T-cell (primary cell): ENCODE measurements at regions of chr19 and their contacts with region 1.

Region 1: GRCh38 chr19:11806354-11807098 is 7.5 kb upstream of the ZNF440 start:
- DNase-seq: no peak
- ATAC-seq: no peak
- H3K4me3 ChIP-seq: no peak overlapping the region
- H3K4me3 Mint-ChIP-seq: no peak overlapping the region
- H3K27ac ChIP-seq: no peak overlapping the region
- H3K27ac Mint-ChIP-seq: no peak overlapping the region
- H3K4me1 ChIP-seq: no peaks in the 10 kb centered on the region
- H3K4me1 Mint-ChIP-seq: no peaks in the 10 kb centered on the region
- H3K27me3 ChIP-seq: no peaks in the 10 kb centered on the region
- H3K27me3 Mint-ChIP-seq: no peaks in the 10 kb centered on the region

Region 2: GRCh38 chr19:11766597-11767591 is 39.6 kb before region 1 on chr19 and contains the start of gene ZNF441:
- CTCF ChIA-PET with region 1: interaction called in 1 of 2 experiments, 13 read pairs
- POLR2A ChIA-PET with region 1: no interaction called
- DNase-seq: peak; percentile 70 to 94 (median 83)
- ATAC-seq: peak; percentile 94 to 97 (median 95)
- H3K4me3 ChIP-seq: peak within 1 kb of the TSS; percentile 71 to 87
- H3K4me3 Mint-ChIP-seq: peak within 1 kb of the TSS; percentile 97 to 99 (median 98)
- H3K27ac ChIP-seq: peak within 1 kb of the TSS; percentile 78
- H3K27ac Mint-ChIP-seq: peak within 1 kb of the TSS; percentile 95
- H3K4me1 ChIP-seq: peaks cover 4 to 19% of the 10 kb centered on the region in 2 experiments
- H3K4me1 Mint-ChIP-seq: peaks cover 21 to 25% (median 23%) of the 10 kb centered on the region in 3 donors
- H3K27me3 ChIP-seq: no peaks in the 10 kb centered on the region
- H3K27me3 Mint-ChIP-seq: peaks cover 4 to 9% of the 10 kb centered on the region in 2 donors
- total RNA-seq, gene ZNF441: 4.8 to 18.4 (median 16.0) TPM

Region 3: DNA sequence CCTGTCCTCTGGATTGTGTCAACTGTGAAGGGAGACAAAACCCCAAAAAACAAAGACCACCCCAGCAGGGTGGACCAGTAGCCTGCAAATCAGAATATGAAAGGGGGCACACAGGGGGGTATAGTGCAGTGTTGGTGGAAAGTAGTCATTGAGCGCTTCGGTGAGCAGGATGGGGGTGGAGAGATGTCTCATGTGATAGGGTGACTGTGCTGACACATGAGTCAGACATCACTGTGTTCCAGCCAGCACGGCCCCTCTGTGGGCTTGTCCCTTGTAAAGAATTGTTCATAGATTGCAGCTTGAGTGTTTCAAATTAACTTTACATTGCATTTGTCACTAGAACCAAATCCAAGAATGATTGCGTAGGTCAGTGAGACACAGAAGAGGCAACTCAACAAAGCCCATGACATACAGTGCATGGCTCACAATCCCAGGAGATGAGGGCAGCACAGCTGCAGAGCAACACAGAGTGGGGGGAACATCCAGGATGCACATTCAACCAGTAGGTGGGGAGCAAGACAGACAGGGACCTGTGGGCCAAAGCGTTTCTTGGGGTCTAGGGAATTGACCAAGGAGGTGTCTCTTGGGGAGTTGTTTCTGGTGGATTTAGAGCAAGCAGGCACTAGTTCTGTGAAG is 15.1 kb after region 1 on chr19:
- CTCF ChIA-PET with region 1: no interaction called
- POLR2A ChIA-PET with region 1: no interaction called
- DNase-seq: no peak
- ATAC-seq: no peak
- H3K4me3 ChIP-seq: no peak overlapping the region
- H3K4me3 Mint-ChIP-seq: no peak overlapping the region
- H3K27ac ChIP-seq: no peak overlapping the region
- H3K27ac Mint-ChIP-seq: no peak overlapping the region
- H3K4me1 ChIP-seq: no peaks in the 10 kb centered on the region
- H3K4me1 Mint-ChIP-seq: peaks cover 0 to 15% (median 9%) of the 10 kb centered on the region in 3 donors
- H3K27me3 ChIP-seq: no peaks in the 10 kb centered on the region
- H3K27me3 Mint-ChIP-seq: no peaks in the 10 kb centered on the region